Gastrocnemius medialis (tissue), 4 donors: ENCODE measurements at regions of chr11 and their contacts with region 1.

Region 1: DNA sequence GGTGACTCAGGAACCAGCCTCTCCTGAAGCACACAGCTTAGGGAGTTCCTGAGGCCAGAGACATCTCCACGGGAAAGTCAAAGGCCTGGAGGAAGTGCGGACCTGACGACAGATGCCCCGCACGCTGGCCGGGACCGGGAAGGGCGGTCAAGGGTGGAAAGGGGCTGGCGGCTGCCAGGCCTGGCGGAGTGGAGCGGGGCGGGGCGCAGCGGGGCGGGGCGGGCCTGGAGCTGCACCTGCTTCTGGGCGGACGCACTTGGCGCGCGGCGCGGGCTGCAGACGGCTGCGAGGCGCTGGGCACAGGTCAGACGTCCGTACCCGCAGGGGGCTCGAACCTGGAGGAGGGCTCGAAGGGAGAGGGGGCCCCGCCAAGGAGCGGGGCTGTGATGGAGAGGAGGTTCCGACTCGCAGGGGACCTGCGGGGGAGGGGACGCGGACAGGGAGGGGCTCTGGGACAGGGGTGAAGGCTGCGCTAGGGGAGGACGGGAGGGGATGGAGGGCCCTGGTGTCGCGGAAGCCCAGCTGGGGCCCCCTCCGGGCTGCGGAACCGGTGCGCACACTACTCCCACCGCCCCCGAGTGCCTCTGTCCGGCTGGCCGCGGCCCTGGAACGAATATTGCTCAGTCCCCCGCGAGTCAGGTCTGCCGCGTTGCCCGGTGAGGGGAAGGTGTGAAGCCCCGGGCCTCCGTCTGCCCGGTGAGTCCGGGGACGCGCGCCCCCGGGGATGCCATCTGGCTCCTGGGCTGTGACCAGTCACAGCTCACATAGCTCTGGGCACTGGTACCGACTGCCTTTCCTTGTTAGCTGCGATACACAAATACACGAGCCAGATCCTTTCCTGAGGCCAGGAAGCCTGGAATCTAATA is at the start of gene TMEM45B:
- DNase-seq: no peak
- ATAC-seq: no peak
- H3K4me3 ChIP-seq: no peak within 1 kb of the TSS
- H3K27ac ChIP-seq: no peak within 1 kb of the TSS
- H3K4me1 ChIP-seq: no peaks in the 10 kb centered on the region
- H3K27me3 ChIP-seq: peaks cover 8 to 28% (median 10%) of the 10 kb centered on the region in 3 donors
- CTCF ChIP-seq: no peak
- POLR2A ChIP-seq: no peak
- total RNA-seq, gene TMEM45B: 1.0 TPM in 1 of 4 donors, not detected in the others

Region 2: DNA sequence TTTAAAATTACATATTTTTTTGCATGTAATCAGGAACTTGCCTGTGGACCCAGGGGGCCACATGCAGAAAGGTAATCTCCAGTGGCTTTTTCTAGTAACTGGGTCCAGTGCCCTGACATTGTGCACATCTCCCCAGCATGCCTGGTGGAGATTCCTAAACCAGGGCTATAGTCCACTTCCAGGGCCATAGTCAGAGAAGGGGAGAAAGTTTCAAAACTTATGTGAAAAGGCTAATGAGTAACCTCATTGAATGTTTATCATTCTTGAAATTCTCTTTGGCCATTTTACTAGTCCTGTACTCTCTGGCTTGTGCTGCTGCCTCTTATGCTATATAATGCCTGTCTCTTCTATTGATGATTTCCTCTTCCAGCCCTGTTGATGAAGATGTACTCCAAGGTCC is 392.4 kb before region 1 on chr11:
- in situ Hi-C with region 1: no loop called
- intact Hi-C with region 1: loop called (anchors 5 kb)
- DNase-seq: no peak
- ATAC-seq: no peak
- H3K4me3 ChIP-seq: no peak overlapping the region
- H3K27ac ChIP-seq: no peak overlapping the region
- H3K4me1 ChIP-seq: no peaks in the 10 kb centered on the region
- H3K27me3 ChIP-seq: peaks cover 0 to 4% (median 0%) of the 10 kb centered on the region in 3 donors
- CTCF ChIP-seq: no peak
- POLR2A ChIP-seq: no peak

Region 3: GRCh38 chr11:130237282-130238006 is 421.6 kb after region 1 on chr11:
- in situ Hi-C with region 1: no loop called
- intact Hi-C with region 1: no loop called
- DNase-seq: no peak
- ATAC-seq: no peak
- H3K4me3 ChIP-seq: no peak overlapping the region
- H3K27ac ChIP-seq: no peak overlapping the region
- H3K4me1 ChIP-seq: no peaks in the 10 kb centered on the region
- H3K27me3 ChIP-seq: no peaks in the 10 kb centered on the region
- CTCF ChIP-seq: no peak
- POLR2A ChIP-seq: no peak